HCT116 (cell line): ENCODE measurements at regions of chr18 and their contacts with region 1.

Region 1: GRCh38 chr18:8389391-8390340 is 219.6 kb upstream of the RAB12 start:
- DNase-seq: peak; percentile 53
- ATAC-seq: peak; percentile 97
- H3K4me3 ChIP-seq: no peak overlapping the region
- H3K27ac ChIP-seq: no peak overlapping the region
- H3K4me1 ChIP-seq: no peaks in the 10 kb centered on the region
- H3K27me3 ChIP-seq: no peaks in the 10 kb centered on the region
- CTCF ChIP-seq: peak; percentile 46 to 96 (median 93); a peak in 5 of 6 replicates
- POLR2A ChIP-seq: no peak
- RAD21 ChIP-seq: peak; percentile 79

Region 2: GRCh38 chr18:7789856-7790552 is 599.7 kb before region 1 on chr18:
- CTCF ChIA-PET with region 1: interaction called, 8 read pairs
- POLR2A ChIA-PET with region 1: no interaction called
- RAD21 ChIA-PET with region 1: no interaction called
- intact Hi-C with region 1: loop called (anchors 1 kb)
- DNase-seq: peak; percentile 29
- ATAC-seq: peak; percentile 89
- H3K4me3 ChIP-seq: no peak overlapping the region
- H3K27ac ChIP-seq: no peak overlapping the region
- H3K4me1 ChIP-seq: no peaks in the 10 kb centered on the region
- H3K27me3 ChIP-seq: no peaks in the 10 kb centered on the region
- CTCF ChIP-seq: peak; percentile 35 to 60 (median 56); a peak in 4 of 6 replicates
- POLR2A ChIP-seq: no peak
- RAD21 ChIP-seq: peak; percentile 71

Region 3: GRCh38 chr18:8084160-8084559 is 305.5 kb before region 1 on chr18:
- CTCF ChIA-PET with region 1: no interaction called
- POLR2A ChIA-PET with region 1: no interaction called
- RAD21 ChIA-PET with region 1: no interaction called
- intact Hi-C with region 1: loop called (anchors 5 kb)
- DNase-seq: peak; percentile 21
- ATAC-seq: peak; percentile 89
- H3K4me3 ChIP-seq: no peak overlapping the region
- H3K27ac ChIP-seq: no peak overlapping the region
- H3K4me1 ChIP-seq: no peaks in the 10 kb centered on the region
- H3K27me3 ChIP-seq: no peaks in the 10 kb centered on the region
- CTCF ChIP-seq: peak; percentile 34 to 77 (median 69); a peak in 5 of 6 replicates
- POLR2A ChIP-seq: no peak
- RAD21 ChIP-seq: peak; percentile 59

Region 4: DNA sequence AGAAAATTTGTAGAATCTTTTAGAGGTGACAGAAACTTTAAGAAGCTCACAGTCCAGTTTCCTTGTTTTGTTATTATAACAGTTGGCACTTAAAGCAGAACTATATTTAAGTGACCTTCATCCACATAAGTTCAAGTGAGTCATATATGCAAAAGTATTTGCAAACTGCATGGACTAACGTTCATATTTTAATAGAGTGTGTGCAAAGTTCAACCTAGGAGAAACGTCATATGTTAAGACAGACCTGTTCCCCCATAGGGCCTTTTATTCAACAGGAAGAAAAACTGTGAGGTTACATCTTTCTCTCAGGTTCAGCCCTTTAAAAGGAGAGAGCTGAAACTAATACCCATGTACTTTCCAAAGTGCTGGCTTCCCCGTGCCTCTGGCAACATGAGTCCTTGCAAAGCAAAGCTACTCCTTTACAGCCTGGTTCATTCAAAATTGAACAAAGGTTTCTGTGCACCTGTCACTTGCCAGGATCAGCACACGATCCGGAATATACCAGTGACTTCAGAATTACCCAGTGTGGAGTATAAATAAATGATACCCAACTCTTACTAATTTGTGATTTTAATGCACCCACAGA is 60.4 kb before region 1 on chr18:
- CTCF ChIA-PET with region 1: no interaction called
- POLR2A ChIA-PET with region 1: no interaction called
- RAD21 ChIA-PET with region 1: no interaction called
- intact Hi-C with region 1: loop called (anchors 10 kb)
- DNase-seq: no peak
- ATAC-seq: no peak
- H3K4me3 ChIP-seq: no peak overlapping the region
- H3K27ac ChIP-seq: no peak overlapping the region
- H3K4me1 ChIP-seq: no peaks in the 10 kb centered on the region; a peak in 1 of 4 replicates
- H3K27me3 ChIP-seq: no peaks in the 10 kb centered on the region; the same call in 1 of the 2 replicates
- CTCF ChIP-seq: no peak
- POLR2A ChIP-seq: no peak
- RAD21 ChIP-seq: no peak